ENCODE measurements at regions of chr11 and their contacts with region 1.

Region 1: GRCh38 chr11:6315811-6316425 is 4.4 kb downstream of the CAVIN3 start:
- DNase-seq: peak; percentile 38
- H3K4me3 ChIP-seq: no peak overlapping the region
- H3K27ac ChIP-seq: no peak overlapping the region
- H3K4me1 ChIP-seq: no peaks in the 10 kb centered on the region
- H3K27me3 ChIP-seq: no peaks in the 10 kb centered on the region
- CTCF ChIP-seq: peak; percentile 48 to 77 (median 60)
- POLR2A ChIP-seq: no peak

Region 2: GRCh38 chr11:6022956-6023355 is 293.0 kb before region 1 on chr11:
- intact Hi-C with region 1: loop called (anchors 5 kb)
- DNase-seq: peak; percentile 7
- H3K4me3 ChIP-seq: no peak overlapping the region
- H3K27ac ChIP-seq: no peak overlapping the region
- H3K4me1 ChIP-seq: no peaks in the 10 kb centered on the region
- H3K27me3 ChIP-seq: no peaks in the 10 kb centered on the region
- CTCF ChIP-seq: peak in 3 of 4 experiments; percentile 29 to 59 (median 45)
- POLR2A ChIP-seq: no peak

Region 3: DNA sequence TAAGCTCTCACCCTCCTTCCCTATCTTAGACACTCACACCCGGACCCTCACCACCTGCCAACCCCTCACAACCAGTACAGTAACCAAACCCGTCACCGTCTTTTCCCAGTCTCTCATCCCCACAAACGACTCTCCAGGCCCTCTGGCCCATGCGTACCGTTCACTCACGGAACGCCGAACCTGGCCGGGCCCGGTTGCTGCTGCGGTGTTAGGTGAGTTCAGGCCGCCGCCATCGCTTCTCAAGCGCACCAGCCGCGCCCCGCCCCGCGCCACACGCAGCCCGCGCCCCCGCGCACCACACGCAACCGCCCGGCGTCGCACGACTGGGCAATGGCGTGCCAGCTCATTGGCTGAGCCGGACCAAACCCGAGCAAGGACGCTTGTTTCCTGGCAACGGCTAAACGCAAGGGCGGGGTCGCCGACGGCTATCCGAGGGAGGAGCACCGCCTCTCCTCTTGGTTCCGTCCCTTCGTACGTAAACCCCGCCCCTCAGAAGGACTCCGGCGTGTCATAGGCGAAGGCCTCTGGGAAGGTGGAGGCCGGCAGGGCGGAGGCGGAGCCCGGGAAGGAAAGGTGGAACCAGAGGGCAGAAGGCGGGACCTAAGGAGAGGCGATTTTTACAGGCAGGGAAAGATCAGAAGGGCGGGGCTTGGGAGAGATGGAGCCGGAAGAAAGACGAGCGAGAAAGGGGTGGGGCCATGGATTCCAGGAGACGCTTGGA is 81.4 kb before region 1 on chr11 and contains the start of gene FHIP1B:
- intact Hi-C with region 1: loop called (anchors 2 kb)
- DNase-seq: peak; percentile 100
- H3K4me3 ChIP-seq: peak within 1 kb of the TSS; percentile 63 to 70
- H3K27ac ChIP-seq: peak within 1 kb of the TSS; percentile 78 to 85
- H3K4me1 ChIP-seq: no peaks in the 10 kb centered on the region
- H3K27me3 ChIP-seq: no peaks in the 10 kb centered on the region
- CTCF ChIP-seq: peak in 2 of 4 experiments; percentile 19
- POLR2A ChIP-seq: peak; percentile 81
- total RNA-seq, gene FHIP1B: 50.6 to 105 TPM

Region 4: DNA sequence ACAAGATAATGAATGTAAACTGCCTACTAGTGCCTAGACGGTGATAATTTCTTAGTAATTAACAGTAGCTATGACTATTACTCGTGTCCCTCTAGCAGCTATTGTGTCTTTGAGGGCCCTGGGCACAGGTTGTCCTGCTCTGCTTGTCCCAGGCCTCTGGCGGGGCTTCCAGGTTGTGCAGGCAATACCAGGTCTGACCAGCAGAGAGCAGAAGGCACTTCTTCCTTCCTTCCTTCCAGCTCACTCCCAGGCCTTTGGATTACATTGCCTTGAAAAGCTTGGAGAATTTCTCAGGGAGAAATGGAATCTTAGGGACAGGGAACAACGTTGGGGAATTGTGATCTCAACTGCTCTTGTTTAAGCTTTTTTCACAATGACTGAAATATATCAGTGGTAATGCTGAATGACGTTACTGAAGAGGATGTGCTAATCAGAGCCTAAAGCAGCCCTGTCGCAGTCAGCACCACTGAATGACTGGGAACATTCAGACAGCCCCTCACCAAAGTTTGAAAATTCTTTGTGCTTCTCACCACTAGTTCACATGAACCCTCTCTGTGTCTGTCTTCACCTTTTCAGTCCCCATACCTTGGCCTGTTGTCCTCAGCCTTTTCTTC is 64.7 kb before region 1 on chr11:
- intact Hi-C with region 1: loop called (anchors 5 kb)
- DNase-seq: peak; percentile 34
- H3K4me3 ChIP-seq: no peak overlapping the region
- H3K27ac ChIP-seq: peak overlapping the region in 1 of 2 donors; percentile 67
- H3K4me1 ChIP-seq: peaks cover 5% of the 10 kb centered on the region
- H3K27me3 ChIP-seq: no peaks in the 10 kb centered on the region
- CTCF ChIP-seq: peak; percentile 46 to 85 (median 74)
- POLR2A ChIP-seq: no peak

Region 5: GRCh38 chr11:6603287-6604080 is 287.6 kb after region 1 on chr11 and contains the starts of genes ILK and RRP8:
- intact Hi-C with region 1: loop called (anchors 5 kb)
- DNase-seq: peak; percentile 90
- H3K4me3 ChIP-seq: peak within 1 kb of the TSS; percentile 80 to 92
- H3K27ac ChIP-seq: peak within 1 kb of the TSS; percentile 93 to 95
- H3K4me1 ChIP-seq: peaks cover 17% of the 10 kb centered on the region
- H3K27me3 ChIP-seq: no peaks in the 10 kb centered on the region
- CTCF ChIP-seq: peak in 2 of 4 experiments; percentile 33 to 43
- POLR2A ChIP-seq: peak; percentile 81
- total RNA-seq, gene ILK: 172 to 195 TPM
- total RNA-seq, gene RRP8: 16.4 to 16.6 TPM

Measured in prostate gland (tissue), 2 donors.